Activated CD4-positive, alpha-beta T cell treated with anti-CD3 and anti-CD28 coated beads, Interleukin-2, amount 10 ng/mL, durations not matched to agents 24 days and 14 days (primary cell): ENCODE measurements at regions of chr13 and their contacts with region 1.

Region 1: DNA sequence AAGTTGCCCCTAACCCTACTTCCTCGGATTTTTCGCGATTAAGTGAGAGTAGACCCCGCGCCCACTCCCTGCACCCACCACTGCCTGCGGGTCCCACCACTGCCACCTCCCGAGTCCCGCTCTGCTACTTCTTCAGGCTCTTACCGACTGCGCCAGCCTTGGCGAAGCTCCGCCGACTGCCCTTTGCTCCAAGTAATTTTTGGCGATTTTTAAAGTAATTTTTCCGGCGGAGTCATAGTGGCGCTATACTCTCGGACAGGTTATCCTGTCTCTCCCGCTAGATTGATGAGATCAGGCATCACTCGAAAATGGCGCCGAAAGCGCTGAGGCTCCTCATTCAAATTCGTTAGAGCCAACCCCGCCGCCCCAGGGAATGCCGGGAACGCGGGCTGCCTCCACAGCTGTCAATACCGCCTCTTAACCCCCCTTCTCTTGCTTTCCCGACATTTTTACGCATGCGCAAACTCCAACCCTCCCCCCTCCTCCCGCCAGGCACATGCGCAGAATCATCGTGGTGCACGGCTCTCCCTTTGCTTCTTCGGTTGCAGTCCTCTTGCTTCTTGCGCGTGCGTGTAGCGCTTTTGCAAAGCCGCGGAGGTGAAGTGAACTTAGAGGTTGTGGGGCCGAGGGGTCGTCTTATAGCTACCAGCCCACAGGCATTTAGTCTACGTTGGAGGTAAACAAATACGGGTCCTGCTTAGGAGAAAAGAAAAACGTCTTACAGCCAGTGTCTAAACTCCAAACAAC is 66.6 kb downstream of the KCNRG start:
- DNase-seq: peak; percentile 99
- H3K4me3 Mint-ChIP-seq: peak overlapping the region; percentile 100
- H3K27ac Mint-ChIP-seq: peak overlapping the region; percentile 100
- H3K4me1 Mint-ChIP-seq: peaks cover 45% of the 10 kb centered on the region
- H3K27me3 Mint-ChIP-seq: peaks cover 5% of the 10 kb centered on the region

Region 2: GRCh38 chr13:49996951-49997895 is 84.6 kb before region 1 on chr13 and contains the start of gene TRIM13:
- intact Hi-C with region 1: loop called (anchors 1 kb)
- DNase-seq: peak; percentile 95
- H3K4me3 Mint-ChIP-seq: peak within 1 kb of the TSS; percentile 88
- H3K27ac Mint-ChIP-seq: peak within 1 kb of the TSS; percentile 95
- H3K4me1 Mint-ChIP-seq: peaks cover 36% of the 10 kb centered on the region
- H3K27me3 Mint-ChIP-seq: no peaks in the 10 kb centered on the region
- total RNA-seq, gene TRIM13: 18.0 and 18.9 TPM in 2 replicates

Region 3: DNA sequence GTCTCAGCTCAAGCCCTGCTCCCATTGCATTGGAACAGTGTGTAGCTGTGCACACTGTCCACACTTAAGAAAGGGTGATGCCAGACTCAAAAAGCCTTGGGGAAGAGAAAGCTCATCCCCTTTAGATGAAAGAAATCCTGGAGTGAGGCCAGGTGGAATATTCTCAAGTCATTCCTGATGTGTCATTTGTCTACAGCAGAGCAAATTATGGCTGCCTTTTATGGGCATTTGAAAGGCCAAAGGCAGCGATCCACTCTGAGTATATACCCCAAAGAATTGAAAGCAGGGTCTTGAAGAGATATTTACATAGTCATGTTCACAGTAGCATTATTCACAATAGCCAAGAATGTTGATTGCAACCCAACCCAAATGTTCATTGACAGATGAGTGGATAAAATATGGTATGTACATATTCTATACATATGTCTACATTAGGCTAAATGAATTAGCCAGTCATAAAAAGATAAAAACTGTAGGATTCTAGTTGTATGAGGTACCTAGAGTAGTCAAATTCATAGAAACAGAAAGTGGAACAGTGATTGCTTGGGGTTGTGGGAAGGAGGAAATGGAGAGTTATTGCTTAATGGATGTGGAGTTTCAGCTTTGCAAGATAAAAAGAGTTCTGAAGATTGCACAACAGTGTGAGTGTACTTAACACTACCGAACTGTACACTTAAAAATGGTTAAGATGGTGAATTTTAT is 148.3 kb after region 1 on chr13:
- intact Hi-C with region 1: loop called (anchors 1 kb)
- DNase-seq: peak; percentile 60
- H3K4me3 Mint-ChIP-seq: peak overlapping the region; percentile 32
- H3K27ac Mint-ChIP-seq: peak overlapping the region; percentile 20
- H3K4me1 Mint-ChIP-seq: peaks cover 51% of the 10 kb centered on the region
- H3K27me3 Mint-ChIP-seq: peaks cover 26% of the 10 kb centered on the region

Region 4: DNA sequence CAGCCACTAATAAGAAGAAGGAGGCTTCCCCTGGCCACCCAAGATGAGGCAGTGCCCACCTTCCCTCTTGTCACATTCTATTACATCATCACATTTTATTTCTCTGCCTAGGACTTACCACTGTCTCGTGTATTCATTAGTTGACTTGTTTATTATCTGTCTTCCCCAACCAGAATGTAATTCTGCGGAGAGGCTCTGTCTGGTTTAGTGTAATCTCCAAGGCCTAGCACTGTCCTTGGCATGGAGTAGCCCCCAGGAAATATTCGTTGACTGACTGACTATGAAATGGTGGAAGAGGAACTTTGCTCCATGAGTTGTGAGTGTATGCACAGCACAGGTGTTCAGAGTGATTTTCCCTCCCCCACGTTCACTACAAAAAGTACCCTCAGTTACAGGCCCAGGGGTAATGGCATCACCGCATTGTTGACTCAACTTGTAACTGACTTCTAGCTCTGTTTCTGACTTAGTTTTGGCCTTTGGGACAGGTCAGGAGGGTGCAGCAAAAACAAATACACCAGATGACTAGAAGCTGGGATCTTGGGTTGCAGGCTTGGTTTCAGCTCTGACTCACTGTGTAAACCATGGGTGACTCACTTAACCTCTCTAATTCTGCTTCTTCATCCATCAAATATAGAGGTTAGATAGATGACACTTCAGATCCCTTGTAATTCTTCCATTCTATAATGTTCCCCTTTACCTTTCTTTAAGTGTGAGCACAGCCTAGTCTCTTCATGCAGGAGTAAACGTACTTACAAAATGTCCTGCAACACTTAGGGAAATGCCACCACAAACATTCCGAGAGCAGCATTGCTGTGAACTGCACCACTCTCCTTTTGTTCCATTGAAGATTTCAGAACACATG is 163.1 kb after region 1 on chr13:
- intact Hi-C with region 1: loop called (anchors 2 kb)
- DNase-seq: peak; percentile 78
- H3K4me3 Mint-ChIP-seq: peak overlapping the region; percentile 41
- H3K27ac Mint-ChIP-seq: peak overlapping the region; percentile 73
- H3K4me1 Mint-ChIP-seq: peaks cover 34% of the 10 kb centered on the region
- H3K27me3 Mint-ChIP-seq: peaks cover 33% of the 10 kb centered on the region

Region 5: DNA sequence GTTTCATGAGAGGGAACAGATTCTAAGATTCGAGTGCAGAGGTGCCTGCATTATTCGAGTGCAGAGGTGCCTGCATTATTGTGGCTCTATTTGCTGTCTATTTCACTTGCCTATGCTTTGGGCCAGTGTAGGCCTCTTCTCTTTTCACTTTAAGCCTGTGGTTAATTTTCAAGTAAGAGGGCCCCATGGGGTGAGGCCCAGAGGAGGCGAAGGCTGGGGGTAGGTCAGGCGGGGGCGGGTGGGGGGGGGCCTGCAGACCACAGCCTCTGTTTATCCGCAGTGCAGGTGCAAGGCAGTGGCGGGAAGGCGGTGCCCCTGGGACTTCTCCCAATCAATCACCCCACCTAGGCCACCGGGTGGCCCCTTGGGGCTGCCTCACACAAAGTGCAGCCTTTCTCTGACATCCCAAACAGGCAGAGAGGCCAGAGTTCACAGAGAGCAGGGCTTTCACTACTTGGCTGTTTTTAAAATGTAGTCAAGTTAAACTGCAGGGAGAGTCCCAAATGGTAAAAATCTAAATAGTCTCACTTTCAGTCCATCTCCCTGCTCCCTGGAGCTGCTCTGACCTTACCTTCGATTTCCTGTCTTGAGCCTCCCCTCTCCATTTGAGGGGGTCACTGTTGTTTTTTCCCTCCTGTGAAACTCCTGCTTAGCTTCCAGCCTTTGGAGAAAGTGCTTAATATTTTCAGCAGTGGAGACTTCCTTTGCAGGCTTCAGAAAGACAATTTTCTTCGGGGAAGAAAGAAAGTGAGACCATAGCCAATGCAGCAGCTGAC is 512.6 kb after region 1 on chr13:
- intact Hi-C with region 1: loop called (anchors 10 kb)
- DNase-seq: peak; percentile 71
- H3K4me3 Mint-ChIP-seq: peak overlapping the region; percentile 62
- H3K27ac Mint-ChIP-seq: peak overlapping the region; percentile 82
- H3K4me1 Mint-ChIP-seq: peaks cover 34% of the 10 kb centered on the region
- H3K27me3 Mint-ChIP-seq: peaks cover 3% of the 10 kb centered on the region

Region 6: GRCh38 chr13:50893211-50893852 is 811.5 kb after region 1 on chr13:
- intact Hi-C with region 1: loop called (anchors 5 kb)
- DNase-seq: peak; percentile 84
- H3K4me3 Mint-ChIP-seq: peak overlapping the region; percentile 63
- H3K27ac Mint-ChIP-seq: peak overlapping the region; percentile 86
- H3K4me1 Mint-ChIP-seq: peaks cover 54% of the 10 kb centered on the region
- H3K27me3 Mint-ChIP-seq: no peaks in the 10 kb centered on the region